AG04450 (cell line): ENCODE measurements at regions of chr6 and their contacts with region 1.

Region 1: DNA sequence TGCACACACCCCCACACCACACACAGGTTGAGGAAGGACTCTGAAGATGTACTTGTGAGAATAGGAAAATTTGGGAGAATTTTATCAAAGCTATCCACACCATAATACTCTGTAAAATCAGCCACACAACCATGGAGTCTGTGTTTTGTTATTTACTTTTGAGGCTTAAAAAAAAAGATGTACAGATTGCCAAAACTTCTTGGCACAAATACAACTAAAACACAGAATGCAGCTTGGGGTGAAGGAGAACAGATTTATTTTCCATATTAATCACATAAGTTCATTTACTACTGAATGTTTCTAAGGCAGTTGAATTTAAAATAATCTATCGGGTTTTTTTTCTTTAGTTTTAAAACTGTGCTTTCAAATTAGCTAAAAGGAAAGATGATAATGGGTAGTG is 32.8 kb upstream of the KCNQ5 start:
- DNase-seq: no peak
- H3K4me3 ChIP-seq: no peak overlapping the region
- H3K27ac ChIP-seq: no peak overlapping the region
- H3K27me3 ChIP-seq: no peaks in the 10 kb centered on the region
- CTCF ChIP-seq: no peak

Region 2: DNA sequence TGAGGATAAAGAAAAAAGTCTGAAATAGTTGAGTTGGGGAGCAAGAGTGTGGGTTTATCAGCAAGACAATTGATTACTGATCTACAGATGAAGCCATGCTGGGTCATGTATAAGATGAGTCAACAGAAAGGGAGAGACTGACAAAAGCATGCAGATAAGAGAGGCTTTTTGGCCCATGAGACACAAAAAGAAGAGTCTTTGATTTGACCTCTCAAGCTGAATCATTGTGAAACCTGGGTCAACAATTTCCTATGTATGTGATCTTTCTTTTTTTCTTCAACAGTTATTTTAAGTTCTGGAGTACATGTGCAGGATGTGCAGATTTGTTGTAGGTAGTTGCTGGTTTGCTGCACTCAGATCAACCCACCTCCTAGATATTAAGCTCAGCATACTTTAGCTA is 686.8 kb before region 1 on chr6:
- CTCF ChIA-PET with region 1: no interaction called
- POLR2A ChIA-PET with region 1: no interaction called
- DNase-seq: no peak
- H3K4me3 ChIP-seq: no peak overlapping the region
- H3K27ac ChIP-seq: no peak overlapping the region
- H3K27me3 ChIP-seq: no peaks in the 10 kb centered on the region
- CTCF ChIP-seq: no peak

Region 3: DNA sequence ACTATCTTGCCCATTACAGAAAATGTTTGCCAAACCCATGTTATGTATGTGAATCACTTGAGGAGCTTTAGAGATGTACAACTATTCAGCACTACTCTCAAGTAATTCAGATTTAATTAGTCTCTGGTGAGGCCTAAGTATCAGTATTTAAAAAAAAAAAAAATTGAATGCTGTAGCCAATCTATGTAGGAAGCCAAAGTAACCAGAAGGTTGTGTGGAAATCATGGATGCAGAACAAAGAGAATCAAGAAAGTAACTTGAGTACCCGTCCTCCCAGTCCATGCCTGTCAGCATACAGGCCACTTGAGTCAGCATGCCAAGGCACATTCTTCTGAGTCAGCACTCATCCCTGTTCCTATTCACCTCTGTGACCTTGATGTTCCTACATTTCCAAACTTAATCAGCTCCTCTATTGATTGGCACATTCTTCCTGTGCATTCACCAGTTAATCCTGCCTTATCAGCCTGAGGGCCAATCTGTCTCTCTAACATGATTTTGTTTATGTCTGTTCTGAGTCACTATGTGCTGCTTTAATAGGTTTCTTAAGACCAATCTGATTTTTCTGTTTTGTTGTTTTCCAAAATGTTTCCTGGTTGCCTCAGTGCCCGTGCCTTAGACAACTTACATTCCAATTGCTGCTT is 198.4 kb after region 1 on chr6:
- CTCF ChIA-PET with region 1: interaction called, 16 read pairs
- POLR2A ChIA-PET with region 1: no interaction called
- DNase-seq: peak; percentile 32
- H3K4me3 ChIP-seq: no peak overlapping the region
- H3K27ac ChIP-seq: peak overlapping the region; percentile 76
- H3K27me3 ChIP-seq: no peaks in the 10 kb centered on the region
- CTCF ChIP-seq: no peak